Body of pancreas (tissue), 4 donors: ENCODE measurements at regions of chr18 and their contacts with region 1.

Region 1: GRCh38 chr18:31942999-31943865 is at the start of gene TRAPPC8:
- DNase-seq: peak; percentile 98 to 99 (median 98)
- ATAC-seq: peak; percentile 97
- H3K4me3 ChIP-seq: peak within 1 kb of the TSS; percentile 75 to 97
- H3K27ac ChIP-seq: peak within 1 kb of the TSS; percentile 75 to 91 (median 89)
- H3K4me1 ChIP-seq: peaks cover 36% of the 10 kb centered on the region
- H3K27me3 ChIP-seq: no peaks in the 10 kb centered on the region
- CTCF ChIP-seq: peak in 2 of 7 experiments; percentile 29 to 31
- POLR2A ChIP-seq: peak; percentile 40 to 84 (median 80)
- total RNA-seq, gene TRAPPC8: 18.7 to 20.8 TPM

Region 2: DNA sequence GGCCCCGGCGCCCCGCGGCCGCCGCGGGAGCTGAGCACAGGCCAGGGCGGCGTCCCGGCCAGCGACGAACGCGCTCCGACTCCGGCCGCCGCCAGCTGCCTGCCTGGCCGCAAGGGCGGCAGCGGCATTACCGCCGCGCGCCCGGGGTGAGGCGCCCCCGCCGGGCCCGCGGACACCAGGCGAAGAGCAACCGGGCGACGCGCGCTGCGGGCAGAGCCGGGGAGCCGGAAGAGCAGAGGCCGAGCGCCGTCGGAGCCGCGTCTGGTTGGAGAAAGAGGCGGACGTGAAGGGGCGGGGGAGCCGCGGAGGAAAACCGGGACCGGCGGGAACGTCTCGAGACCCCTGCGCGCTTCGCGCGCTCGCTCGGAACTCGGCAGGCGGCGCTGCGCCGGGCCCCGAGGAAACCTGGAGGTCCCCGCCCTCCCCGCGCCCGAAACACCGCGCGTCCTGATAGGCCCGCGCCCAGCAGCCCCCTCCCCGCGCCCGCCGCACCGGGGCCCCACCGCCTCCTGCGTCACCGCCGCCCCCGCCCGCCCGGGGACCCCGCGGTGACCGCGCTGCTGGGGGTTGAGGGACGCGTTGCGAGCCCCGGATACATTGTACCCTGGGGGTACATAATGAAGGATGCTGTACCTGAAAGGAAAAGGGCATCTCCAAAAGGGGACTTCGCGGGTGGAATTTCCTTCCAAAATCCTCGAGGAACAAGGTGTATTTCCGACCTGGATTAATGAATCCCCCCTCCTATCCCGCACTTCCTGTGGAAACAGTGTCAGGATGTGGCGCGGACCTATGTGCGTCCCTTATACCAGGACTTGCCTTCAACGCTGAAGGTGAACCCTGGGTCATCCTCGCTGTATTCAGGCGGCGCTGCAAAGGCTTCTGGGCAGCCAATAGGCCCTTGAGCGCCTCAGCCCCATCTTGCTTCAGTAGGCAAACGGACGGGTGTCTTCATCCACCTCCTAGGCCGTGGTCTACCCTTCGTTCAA is 257.8 kb before region 1 on chr18:
- intact Hi-C with region 1: no loop called
- DNase-seq: peak; percentile 66 to 81 (median 77)
- ATAC-seq: peak; percentile 90
- H3K4me3 ChIP-seq: peak overlapping the region; percentile 18 to 23
- H3K27ac ChIP-seq: peak overlapping the region in 3 of 4 donors; percentile 75 to 86 (median 78)
- H3K4me1 ChIP-seq: peaks cover 13% of the 10 kb centered on the region
- H3K27me3 ChIP-seq: no peaks in the 10 kb centered on the region
- CTCF ChIP-seq: peak; percentile 27 to 66 (median 52)
- POLR2A ChIP-seq: peak; percentile 38 to 60 (median 54)

Region 3: GRCh38 chr18:32018331-32019250 is 75.4 kb after region 1 on chr18 and contains the start of gene RNF125:
- intact Hi-C with region 1: no loop called
- DNase-seq: peak; percentile 75 to 83 (median 79)
- ATAC-seq: peak; percentile 87
- H3K4me3 ChIP-seq: peak within 1 kb of the TSS; percentile 39 to 44
- H3K27ac ChIP-seq: peak within 1 kb of the TSS; percentile 18 to 83 (median 76)
- H3K4me1 ChIP-seq: peaks cover 16% of the 10 kb centered on the region
- H3K27me3 ChIP-seq: peaks cover 0 to 3% of the 10 kb centered on the region in 2 donors
- CTCF ChIP-seq: peak in 2 of 7 experiments; percentile 9 to 24
- POLR2A ChIP-seq: peak; percentile 60 to 87 (median 79)
- total RNA-seq, gene RNF125: 2.6 to 4.9 TPM

Region 4: DNA sequence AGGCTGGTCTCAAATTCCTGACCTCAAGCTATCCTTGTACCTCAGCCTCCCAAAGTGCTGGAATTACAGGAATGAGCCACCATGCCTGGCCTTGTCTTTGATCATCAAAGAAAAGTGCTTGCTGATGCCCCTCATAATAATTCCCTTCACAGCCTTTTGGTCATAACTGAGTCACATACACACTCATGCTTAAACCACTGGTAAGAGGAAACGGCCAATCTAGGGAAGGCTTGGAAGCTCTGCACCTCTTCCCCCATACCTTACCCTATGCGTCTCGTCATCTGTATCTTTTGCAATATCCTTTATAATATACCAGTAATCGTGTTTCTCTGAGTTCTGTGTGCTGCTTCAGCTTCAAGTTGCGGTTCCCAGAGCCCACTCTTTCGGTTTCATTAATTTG is 143.6 kb after region 1 on chr18:
- intact Hi-C with region 1: loop called (anchors 10 kb)
- DNase-seq: no peak
- ATAC-seq: no peak
- H3K4me3 ChIP-seq: no peak overlapping the region
- H3K27ac ChIP-seq: no peak overlapping the region
- H3K4me1 ChIP-seq: peaks cover 16% of the 10 kb centered on the region
- H3K27me3 ChIP-seq: no peaks in the 10 kb centered on the region
- CTCF ChIP-seq: no peak
- POLR2A ChIP-seq: no peak

Region 5: DNA sequence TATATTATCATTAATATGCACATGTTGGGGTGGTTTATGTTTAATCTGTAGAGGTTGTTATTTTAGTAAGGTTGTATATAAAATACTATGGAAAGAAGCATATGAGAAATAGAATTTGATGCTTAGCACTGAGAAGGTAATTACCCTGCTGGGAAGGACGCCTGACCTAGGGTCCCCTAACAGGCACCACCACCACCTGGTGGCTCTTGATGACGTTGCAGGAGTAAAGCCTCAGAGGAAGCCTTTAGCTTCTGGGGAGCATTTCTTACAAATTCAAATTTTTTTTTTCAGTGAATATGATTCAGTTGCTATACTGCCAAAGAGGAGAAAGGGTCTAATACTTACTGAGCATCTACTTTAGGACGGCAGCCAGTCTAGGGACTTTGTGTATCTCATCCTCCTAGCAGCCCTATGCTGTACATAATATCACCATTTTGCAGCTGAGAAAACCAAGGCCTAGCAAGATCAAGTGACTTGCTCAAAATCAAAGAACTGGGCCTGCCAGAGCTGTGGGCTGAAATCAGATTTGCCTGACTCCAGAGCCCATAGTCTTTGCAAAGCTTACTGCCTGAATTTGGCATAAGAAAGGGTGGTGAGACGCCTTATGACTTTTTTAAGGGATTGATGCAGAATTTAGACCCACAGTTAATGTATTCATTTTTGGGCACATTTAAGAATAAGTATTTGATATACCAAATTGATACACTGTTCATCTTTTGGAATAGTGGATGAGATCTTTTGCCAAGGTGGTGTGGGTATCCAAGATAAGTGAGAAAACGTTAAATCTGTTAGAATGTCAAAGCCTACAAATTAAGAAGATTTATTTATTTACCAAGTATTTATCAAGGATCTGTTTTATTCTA is 606.2 kb after region 1 on chr18:
- intact Hi-C with region 1: no loop called
- DNase-seq: peak; percentile 62 to 75 (median 66)
- ATAC-seq: peak; percentile 87
- H3K4me3 ChIP-seq: no peak overlapping the region
- H3K27ac ChIP-seq: no peak overlapping the region
- H3K4me1 ChIP-seq: no peaks in the 10 kb centered on the region
- H3K27me3 ChIP-seq: no peaks in the 10 kb centered on the region
- CTCF ChIP-seq: peak; percentile 63 to 86 (median 79)
- POLR2A ChIP-seq: no peak